Calu3 (cell line): ENCODE measurements at regions of chr1 and their contacts with region 1.

Region 1: GRCh38 chr1:182974506-182975191 is 21.7 kb upstream of the SHCBP1L start:
- DNase-seq: no peak
- H3K4me3 Mint-ChIP-seq: no peak overlapping the region
- H3K27ac Mint-ChIP-seq: peak overlapping the region; percentile 37
- H3K4me1 Mint-ChIP-seq: peaks cover 61% of the 10 kb centered on the region
- H3K27me3 Mint-ChIP-seq: no peaks in the 10 kb centered on the region
- CTCF ChIP-seq: no peak

Region 2: DNA sequence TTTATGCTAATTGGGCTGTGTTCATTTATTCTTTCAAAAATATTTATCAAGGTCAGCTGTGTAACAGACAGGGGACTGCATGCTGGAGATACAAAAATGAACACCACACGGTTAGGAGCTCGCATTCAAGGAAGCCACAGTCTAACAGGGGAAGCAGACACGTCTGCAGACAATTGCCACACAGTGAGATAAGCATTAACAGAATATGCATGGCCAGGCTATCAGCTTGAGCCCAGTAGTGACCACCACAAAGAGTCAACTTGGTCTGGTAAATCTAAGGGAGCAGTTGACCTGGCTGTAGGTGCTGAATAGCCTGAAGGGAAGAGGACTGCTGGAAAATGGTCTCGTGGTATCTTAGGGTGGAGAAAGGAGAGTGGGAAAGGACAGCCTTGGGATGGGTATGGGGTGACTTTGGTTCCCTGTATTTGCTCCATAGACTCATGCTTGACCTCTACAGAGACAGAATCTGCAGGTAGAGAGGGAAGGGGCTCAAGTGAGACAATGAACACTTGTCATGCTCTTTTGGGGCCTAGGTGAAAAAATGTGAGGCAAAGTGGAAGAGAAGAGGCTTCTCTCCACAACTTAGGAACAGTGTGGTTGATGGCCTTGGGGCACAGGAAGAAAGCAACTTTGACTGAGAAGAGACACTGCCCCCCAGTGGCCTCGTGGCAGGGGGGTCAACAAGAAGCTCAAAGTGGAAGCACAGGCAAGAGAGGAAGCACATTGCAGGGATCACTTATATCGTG is 192.6 kb before region 1 on chr1:
- CTCF ChIA-PET with region 1: no interaction called
- intact Hi-C with region 1: no loop called
- DNase-seq: peak; percentile 80
- H3K4me3 Mint-ChIP-seq: no peak overlapping the region
- H3K27ac Mint-ChIP-seq: no peak overlapping the region
- H3K4me1 Mint-ChIP-seq: peaks cover 10% of the 10 kb centered on the region
- H3K27me3 Mint-ChIP-seq: peaks cover 7% of the 10 kb centered on the region
- CTCF ChIP-seq: peak; percentile 83

Region 3: DNA sequence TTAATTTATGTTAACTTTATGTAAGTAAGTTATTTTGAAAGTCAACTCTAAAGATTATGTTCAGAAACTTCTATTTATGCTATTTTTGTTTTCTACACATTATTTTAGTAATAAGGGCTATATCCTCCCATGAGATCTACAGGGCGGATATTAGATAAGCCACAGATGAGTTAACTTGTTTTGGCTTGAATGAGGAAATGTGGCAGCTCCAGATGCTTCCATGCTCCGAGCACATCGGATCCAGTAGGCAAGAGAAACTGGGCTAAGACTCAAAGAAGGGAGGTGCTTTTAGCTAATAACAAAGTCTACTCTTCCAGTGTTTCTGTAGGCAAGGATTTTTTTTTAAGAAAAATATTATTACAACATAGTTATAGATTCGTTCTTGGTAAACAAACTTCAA is 28.6 kb after region 1 on chr1:
- CTCF ChIA-PET with region 1: interaction called, 5 read pairs
- intact Hi-C with region 1: loop called (anchors 2 kb)
- DNase-seq: no peak
- H3K4me3 Mint-ChIP-seq: peak overlapping the region; percentile 50
- H3K27ac Mint-ChIP-seq: peak overlapping the region; percentile 76
- H3K4me1 Mint-ChIP-seq: peaks cover 66% of the 10 kb centered on the region
- H3K27me3 Mint-ChIP-seq: no peaks in the 10 kb centered on the region
- CTCF ChIP-seq: no peak